PC-9 (cell line): ENCODE measurements at regions of chr17 and their contacts with region 1.

Region 1: GRCh38 chr17:10875979-10876555 is 38.2 kb upstream of the PIRT start:
- DNase-seq: peak in 1 of 2 experiments; percentile 22
- H3K4me3 ChIP-seq: no peak overlapping the region
- H3K27ac ChIP-seq: no peak overlapping the region
- H3K4me1 ChIP-seq: no peaks in the 10 kb centered on the region
- H3K27me3 ChIP-seq: no peaks in the 10 kb centered on the region
- CTCF ChIP-seq: peak; percentile 69

Region 2: DNA sequence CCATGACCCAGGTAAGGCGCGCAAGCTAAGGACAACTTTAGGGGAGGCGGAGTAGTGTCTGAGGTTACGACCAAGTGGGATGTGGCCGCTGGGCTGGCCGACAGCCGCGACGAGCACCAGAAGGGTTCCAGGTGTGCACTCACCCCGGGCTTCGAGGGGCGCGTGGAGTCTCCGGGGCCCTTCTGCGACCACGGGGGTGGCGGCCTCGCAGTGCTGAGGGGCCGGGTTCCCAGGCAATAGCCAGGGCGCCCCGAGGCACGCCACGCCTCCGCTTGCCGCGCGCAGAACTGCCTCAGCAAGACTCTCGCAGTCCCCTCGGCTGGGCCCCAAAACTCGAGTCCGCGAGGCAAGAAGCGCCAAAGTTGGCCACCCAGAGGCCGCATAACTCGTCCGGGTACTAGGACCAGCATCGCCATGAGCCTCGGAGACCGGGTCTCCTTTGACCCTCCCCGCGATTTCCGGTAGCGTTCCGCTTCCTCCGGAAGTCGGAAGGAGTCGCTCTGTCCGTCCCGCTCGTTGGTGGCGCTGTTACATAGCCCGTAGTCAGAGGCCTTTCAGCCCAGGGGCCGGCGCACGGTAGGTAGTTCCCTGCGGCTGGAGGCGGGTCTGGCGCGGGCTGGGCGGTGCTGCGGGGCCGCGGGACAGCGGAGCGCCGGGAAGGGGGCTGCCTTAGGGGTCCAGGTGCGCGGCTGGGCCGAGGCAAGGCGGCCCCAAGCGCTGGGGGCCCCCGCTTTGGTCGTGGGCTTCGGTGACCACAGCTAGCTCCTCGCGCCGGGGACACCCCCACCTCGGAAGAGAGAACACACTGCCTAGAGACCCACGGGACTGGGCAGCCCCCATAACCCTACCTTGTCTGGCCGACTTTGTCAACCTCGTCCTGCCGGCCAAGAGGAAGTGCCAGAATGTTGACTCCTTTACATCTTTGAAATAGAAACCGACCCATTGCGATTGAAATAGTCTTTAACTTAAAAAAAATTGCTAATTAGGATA is 178.7 kb before region 1 on chr17 and contains the starts of genes ADPRM and SCO1:
- CTCF ChIA-PET with region 1: no interaction called
- POLR2A ChIA-PET with region 1: no interaction called
- intact Hi-C with region 1: no loop called
- DNase-seq: peak; percentile 83 to 91
- H3K4me3 ChIP-seq: peak within 1 kb of the TSS; percentile 90
- H3K27ac ChIP-seq: 0 out of 2 replicates have a peak within 1 kb of the TSS, but pooled peaks have one; percentile 39
- H3K4me1 ChIP-seq: no peaks in the 10 kb centered on the region
- H3K27me3 ChIP-seq: no peaks in the 10 kb centered on the region
- CTCF ChIP-seq: peak; percentile 41; the same call in 1 of the 2 replicates
- total RNA-seq, gene ADPRM: 6.4 and 7.9 TPM in 2 replicates
- total RNA-seq, gene SCO1: 39.6 and 59.6 TPM in 2 replicates

Region 3: GRCh38 chr17:10821064-10821463 is 55.0 kb before region 1 on chr17:
- CTCF ChIA-PET with region 1: no interaction called
- POLR2A ChIA-PET with region 1: no interaction called
- intact Hi-C with region 1: no loop called
- DNase-seq: no peak
- H3K4me3 ChIP-seq: no peak overlapping the region
- H3K27ac ChIP-seq: no peak overlapping the region
- H3K4me1 ChIP-seq: no peaks in the 10 kb centered on the region
- H3K27me3 ChIP-seq: peaks cover 25% of the 10 kb centered on the region
- CTCF ChIP-seq: no peak

Region 4: DNA sequence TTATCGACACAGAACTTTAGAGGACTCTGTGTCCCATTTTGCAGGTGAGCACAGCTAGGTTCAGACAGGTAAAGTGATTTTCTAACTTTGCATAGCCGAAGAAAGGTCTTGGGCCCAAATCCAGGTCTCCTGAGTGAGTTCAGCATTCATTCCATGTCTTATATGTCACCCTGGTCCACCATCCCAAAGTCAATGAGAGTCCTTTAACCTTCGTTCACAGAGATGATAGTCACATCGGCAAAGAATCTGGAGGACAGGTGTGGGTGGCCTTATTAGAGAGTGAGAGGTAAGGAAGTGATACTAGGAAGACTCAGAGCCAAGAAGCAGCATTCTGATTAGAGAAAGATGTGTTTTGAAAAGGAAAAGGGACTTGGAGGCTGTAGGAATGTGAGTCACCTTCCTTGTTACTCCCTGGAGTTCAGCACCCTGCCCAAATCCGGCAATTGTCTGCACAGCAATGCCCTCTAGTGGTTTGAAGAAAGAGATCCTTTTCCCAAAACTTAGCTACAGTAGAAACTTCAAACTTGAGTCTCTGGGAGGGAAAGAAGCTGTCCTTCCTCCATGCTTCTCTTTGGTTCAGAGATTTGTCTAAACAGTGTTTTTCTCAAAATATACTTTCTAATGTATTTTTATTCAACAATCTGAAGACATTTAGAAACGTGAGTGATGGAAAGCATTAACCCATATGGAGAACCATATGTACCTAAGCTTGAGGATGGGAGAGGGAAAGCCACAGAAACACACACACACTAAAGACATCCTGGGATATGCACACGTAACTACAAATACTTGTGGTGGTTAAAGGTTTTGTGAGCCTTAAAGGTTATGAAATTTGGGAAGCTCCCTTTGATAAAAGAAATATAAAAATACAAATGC is 268.5 kb after region 1 on chr17:
- CTCF ChIA-PET with region 1: interaction called, 9 read pairs
- POLR2A ChIA-PET with region 1: no interaction called
- intact Hi-C with region 1: loop called (anchors 1 kb)
- DNase-seq: peak; percentile 14 to 38
- H3K4me3 ChIP-seq: no peak overlapping the region
- H3K27ac ChIP-seq: no peak overlapping the region
- H3K4me1 ChIP-seq: no peaks in the 10 kb centered on the region
- H3K27me3 ChIP-seq: peaks cover 9% of the 10 kb centered on the region; the same call in 1 of the 2 replicates
- CTCF ChIP-seq: peak; percentile 67

Region 5: GRCh38 chr17:11296994-11297393 is 420.9 kb after region 1 on chr17:
- CTCF ChIA-PET with region 1: no interaction called
- POLR2A ChIA-PET with region 1: no interaction called
- intact Hi-C with region 1: loop called (anchors 2 kb)
- DNase-seq: no peak
- H3K4me3 ChIP-seq: no peak overlapping the region
- H3K27ac ChIP-seq: no peak overlapping the region
- H3K4me1 ChIP-seq: no peaks in the 10 kb centered on the region
- H3K27me3 ChIP-seq: peaks cover 17% of the 10 kb centered on the region
- CTCF ChIP-seq: peak; percentile 44

Region 6: GRCh38 chr17:11308531-11308930 is 432.5 kb after region 1 on chr17:
- CTCF ChIA-PET with region 1: no interaction called
- POLR2A ChIA-PET with region 1: no interaction called
- intact Hi-C with region 1: no loop called
- DNase-seq: no peak
- H3K4me3 ChIP-seq: no peak overlapping the region
- H3K27ac ChIP-seq: no peak overlapping the region
- H3K4me1 ChIP-seq: no peaks in the 10 kb centered on the region
- H3K27me3 ChIP-seq: no peaks in the 10 kb centered on the region
- CTCF ChIP-seq: no peak

Region 7: DNA sequence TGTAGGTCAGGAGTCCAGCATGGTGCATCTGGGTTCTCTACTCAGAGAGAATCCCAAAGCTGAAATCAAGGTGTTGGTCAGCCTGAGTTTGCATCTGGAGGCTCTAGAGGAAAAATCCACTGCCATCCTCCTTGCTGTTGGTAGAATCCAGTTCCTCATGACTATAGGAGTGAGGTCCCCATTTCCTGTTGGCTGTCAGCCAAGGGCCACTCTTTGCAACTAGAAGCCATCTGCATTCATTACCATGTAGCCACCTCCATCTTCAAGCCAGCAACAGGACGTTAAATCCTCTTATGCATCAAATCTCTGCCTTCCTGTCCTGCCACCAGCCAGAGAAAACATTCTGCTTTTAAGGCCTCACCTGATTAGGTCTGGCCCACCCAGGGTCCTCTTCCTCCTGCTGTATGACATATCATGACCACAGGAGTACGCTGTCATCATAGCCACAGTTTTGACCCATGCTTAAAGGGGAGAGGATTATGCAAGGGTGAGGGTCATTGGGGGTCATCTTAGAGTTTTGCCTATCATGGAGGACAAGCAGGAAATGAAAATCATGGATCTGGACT is 762.7 kb after region 1 on chr17:
- CTCF ChIA-PET with region 1: no interaction called
- POLR2A ChIA-PET with region 1: no interaction called
- intact Hi-C with region 1: no loop called
- DNase-seq: no peak
- H3K4me3 ChIP-seq: no peak overlapping the region
- H3K27ac ChIP-seq: no peak overlapping the region
- H3K4me1 ChIP-seq: no peaks in the 10 kb centered on the region
- H3K27me3 ChIP-seq: no peaks in the 10 kb centered on the region
- CTCF ChIP-seq: no peak

Region 8: DNA sequence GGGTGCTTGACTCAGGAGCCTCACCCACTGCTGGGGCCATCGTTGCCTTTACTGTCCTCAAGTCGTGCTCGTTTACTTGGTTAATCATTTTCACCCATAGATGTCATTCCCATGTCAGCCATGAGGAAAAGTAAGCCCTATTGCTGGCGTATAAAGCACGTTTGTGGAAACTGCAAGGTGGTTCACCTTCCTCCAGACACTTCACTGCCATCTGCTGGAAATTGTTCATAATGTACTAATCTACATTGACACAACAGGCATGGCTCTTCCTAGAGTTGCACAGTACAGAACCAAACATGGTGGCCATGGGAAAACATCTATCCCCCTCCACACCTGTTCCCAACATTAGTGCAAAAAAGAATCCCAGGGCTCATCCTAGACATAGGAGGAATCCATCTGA is 1004.6 kb after region 1 on chr17:
- CTCF ChIA-PET with region 1: interaction called, 24 read pairs
- POLR2A ChIA-PET with region 1: no interaction called
- intact Hi-C with region 1: no loop called
- DNase-seq: no peak
- H3K4me3 ChIP-seq: no peak overlapping the region
- H3K27ac ChIP-seq: no peak overlapping the region
- H3K4me1 ChIP-seq: no peaks in the 10 kb centered on the region
- H3K27me3 ChIP-seq: peaks cover 7% of the 10 kb centered on the region
- CTCF ChIP-seq: peak; percentile 15; the same call in 1 of the 2 replicates

Region 9: DNA sequence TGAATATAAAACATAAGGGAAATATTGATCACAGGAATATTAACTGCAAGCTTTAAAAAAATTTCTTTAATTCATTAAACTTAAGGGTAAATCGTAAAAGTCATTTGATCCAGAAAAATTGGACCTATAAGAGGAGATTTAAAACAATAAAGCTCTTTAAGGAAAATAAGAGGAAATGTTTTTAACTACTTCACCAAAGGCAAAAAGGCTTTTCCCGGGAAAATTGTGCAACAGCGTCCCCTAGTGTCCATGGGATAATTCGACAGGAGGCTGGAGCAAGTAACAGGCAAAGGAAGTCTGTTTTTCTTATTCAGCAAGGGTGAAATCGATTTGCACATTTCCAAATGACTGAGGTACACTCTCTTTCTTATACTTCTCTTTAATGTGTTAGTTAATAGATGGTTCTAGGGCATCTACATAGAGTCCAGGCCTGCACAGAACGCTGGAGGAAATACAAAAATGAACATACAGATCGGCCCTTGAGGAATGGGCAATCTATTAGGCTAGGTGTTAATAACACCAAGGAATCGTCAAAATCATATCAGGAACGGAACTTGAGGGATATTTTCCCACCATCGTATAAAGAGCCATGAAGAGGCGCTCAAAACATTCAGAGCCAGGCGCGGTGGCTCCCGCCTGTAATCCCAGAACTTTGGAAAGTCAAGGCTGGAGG is 1059.8 kb after region 1 on chr17:
- CTCF ChIA-PET with region 1: no interaction called
- POLR2A ChIA-PET with region 1: no interaction called
- intact Hi-C with region 1: loop called (anchors 10 kb)
- DNase-seq: peak in 1 of 2 experiments; percentile 55
- H3K4me3 ChIP-seq: no peak overlapping the region
- H3K27ac ChIP-seq: no peak overlapping the region
- H3K4me1 ChIP-seq: no peaks in the 10 kb centered on the region
- H3K27me3 ChIP-seq: peaks cover 45% of the 10 kb centered on the region
- CTCF ChIP-seq: peak; percentile 89

Region 10: GRCh38 chr17:11986942-11987329 is 1110.9 kb after region 1 on chr17:
- CTCF ChIA-PET with region 1: interaction called, 3 read pairs
- POLR2A ChIA-PET with region 1: no interaction called
- intact Hi-C with region 1: loop called (anchors 10 kb)
- DNase-seq: peak; percentile 2 to 37
- H3K4me3 ChIP-seq: no peak overlapping the region
- H3K27ac ChIP-seq: no peak overlapping the region
- H3K4me1 ChIP-seq: no peaks in the 10 kb centered on the region
- H3K27me3 ChIP-seq: no peaks in the 10 kb centered on the region
- CTCF ChIP-seq: peak; percentile 65